Common myeloid progenitor, CD34-positive (primary cell): ENCODE measurements at regions of chr1 and their contacts with region 1.

Region 1: DNA sequence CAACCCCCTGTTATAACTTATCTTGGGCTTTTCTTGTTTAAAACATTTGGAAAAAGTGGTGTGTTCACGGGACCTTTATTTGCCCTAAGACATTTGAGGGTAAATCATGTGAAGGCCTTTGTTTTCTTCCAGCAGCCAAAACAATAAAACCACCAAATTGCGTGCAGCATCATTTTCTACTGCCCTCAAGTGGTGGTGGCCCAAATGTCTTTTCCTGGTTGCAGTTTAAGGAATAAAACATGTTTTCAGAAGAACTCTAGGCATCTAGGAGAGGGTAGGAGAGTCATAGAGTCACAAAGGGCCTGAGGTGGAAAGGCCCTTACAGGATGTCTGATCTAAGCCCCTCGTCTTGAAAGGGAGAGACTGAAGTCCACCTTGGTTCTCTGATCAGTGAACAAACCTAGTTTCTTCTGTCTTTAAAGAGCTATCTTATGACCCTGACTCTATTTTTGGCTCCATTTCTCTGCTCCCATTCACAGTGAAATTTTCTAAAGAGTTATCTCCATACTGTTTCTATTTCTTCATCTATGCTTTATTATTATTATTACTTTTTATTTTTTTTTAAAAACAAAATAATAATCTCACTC is 16.0 kb upstream of the EPS15 start:
- DNase-seq: peak; percentile 70 to 79 (median 77)
- H3K4me3 ChIP-seq: no peak overlapping the region
- H3K27ac ChIP-seq: no peak overlapping the region
- H3K4me1 ChIP-seq: peaks cover 0 to 7% (median 6%) of the 10 kb centered on the region in 4 experiments
- H3K27me3 ChIP-seq: no peaks in the 10 kb centered on the region

Region 2: GRCh38 chr1:51519048-51519864 is 15.8 kb before region 1 on chr1 and contains the start of gene EPS15:
- CTCF ChIA-PET with region 1: interaction called, 19 read pairs
- POLR2A ChIA-PET with region 1: no interaction called
- DNase-seq: peak; percentile 82 to 92 (median 91)
- H3K4me3 ChIP-seq: peak within 1 kb of the TSS; percentile 84 to 98 (median 91)
- H3K27ac ChIP-seq: peak within 1 kb of the TSS; percentile 72 to 89
- H3K4me1 ChIP-seq: peaks cover 26 to 51% (median 38%) of the 10 kb centered on the region in 4 experiments
- H3K27me3 ChIP-seq: no peaks in the 10 kb centered on the region

Region 3: GRCh38 chr1:51784997-51785421 is 249.9 kb after region 1 on chr1:
- CTCF ChIA-PET with region 1: no interaction called
- POLR2A ChIA-PET with region 1: no interaction called
- DNase-seq: no peak
- H3K4me3 ChIP-seq: no peak overlapping the region
- H3K27ac ChIP-seq: no peak overlapping the region
- H3K4me1 ChIP-seq: no peaks in the 10 kb centered on the region
- H3K27me3 ChIP-seq: no peaks in the 10 kb centered on the region